GM10248 (cell line): ENCODE measurements at regions of chr5 and their contacts with region 1.

Region 1: DNA sequence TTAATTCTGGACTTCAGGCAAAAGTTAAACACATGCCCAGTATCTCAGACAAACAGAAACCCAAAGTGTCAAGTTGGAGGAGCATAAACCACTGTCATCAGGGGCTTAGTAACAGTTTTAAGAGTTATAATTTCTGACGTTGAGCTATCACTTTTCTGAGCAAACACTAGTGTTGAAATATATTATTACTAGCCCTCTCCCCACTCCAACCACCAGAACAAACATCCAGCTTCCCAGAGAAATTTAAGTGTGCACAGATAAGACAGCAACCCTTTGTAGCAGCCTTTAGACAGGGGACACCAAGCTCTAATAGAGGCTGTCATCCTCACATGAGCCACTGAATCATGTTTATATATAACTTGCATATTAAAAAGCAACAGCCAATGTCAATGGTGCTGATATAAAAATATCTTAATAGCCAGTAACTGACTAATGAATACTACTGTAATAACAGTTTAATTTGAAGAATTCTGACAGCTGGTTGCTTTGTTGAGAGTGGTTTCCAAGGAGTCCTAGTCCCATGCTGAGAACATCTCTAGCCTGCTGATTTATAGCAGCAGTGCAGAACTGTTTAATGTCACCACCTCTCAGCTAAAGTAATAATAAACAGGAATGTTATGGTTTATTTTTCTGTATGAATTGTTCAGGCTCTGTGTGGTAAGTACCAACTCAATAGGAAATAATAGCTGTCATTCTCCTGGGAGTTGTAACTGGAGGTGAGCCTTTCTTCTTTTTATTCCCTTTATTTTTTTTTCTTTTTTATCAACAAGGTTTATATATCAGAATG is 528.7 kb upstream of the ZNF608 start:
- DNase-seq: no peak
- CTCF ChIP-seq: no peak

Region 2: DNA sequence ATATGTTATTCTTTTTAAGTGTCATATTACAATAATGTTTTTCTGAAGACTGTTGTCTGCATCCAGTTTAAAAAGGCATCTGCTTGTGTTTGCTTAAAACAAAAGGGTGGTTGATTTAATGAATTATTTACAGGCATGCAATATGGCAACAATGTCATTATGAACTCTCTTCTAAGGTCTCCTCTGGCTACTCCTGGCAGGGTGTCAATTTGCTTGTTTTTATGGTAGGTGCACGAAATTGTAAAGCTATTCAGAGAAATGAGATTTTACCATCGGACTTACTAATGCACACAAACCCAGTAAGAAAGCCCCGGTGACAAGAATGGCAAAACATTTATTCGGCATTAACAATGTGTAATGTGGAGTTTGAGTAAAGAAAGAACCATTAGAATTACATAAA is 11.1 kb after region 1 on chr5:
- CTCF ChIA-PET with region 1: interaction called, 11 read pairs
- POLR2A ChIA-PET with region 1: no interaction called
- DNase-seq: no peak
- CTCF ChIP-seq: no peak